Posterior cingulate gyrus (tissue), 11 donors: ENCODE measurements at regions of chr14 and their contacts with region 1.

Region 1: GRCh38 chr14:79971330-79971729 is 240.0 kb downstream of the DIO2 start:
- DNase-seq: no peak

Region 2: DNA sequence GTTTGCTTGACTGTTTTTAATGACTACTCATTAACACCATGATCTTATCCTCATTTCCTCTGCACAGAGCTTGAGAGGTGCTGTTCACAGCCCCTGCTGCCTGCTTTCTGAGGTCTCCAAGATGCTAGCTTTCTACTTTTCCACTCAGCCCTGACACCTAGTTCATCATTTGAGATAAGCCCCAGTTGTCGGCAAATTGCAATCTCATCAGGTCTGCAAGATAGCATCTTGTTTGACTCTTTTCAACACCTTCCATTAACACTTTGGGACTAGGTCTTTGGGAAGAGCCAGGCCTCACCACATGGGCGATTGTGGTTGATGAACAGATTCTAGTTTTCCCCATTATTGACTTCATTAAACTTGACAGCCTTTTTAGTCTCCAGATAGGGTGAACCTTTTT is 664.8 kb before region 1 on chr14:
- intact Hi-C with region 1: loop called (anchors 5 kb)
- DNase-seq: no peak

Region 3: GRCh38 chr14:80192993-80193392 is 221.7 kb after region 1 on chr14:
- intact Hi-C with region 1: no loop called
- DNase-seq: no peak